CD4-positive, alpha-beta T cell (primary cell): ENCODE measurements at regions of chr2 and their contacts with region 1.

Region 1: DNA sequence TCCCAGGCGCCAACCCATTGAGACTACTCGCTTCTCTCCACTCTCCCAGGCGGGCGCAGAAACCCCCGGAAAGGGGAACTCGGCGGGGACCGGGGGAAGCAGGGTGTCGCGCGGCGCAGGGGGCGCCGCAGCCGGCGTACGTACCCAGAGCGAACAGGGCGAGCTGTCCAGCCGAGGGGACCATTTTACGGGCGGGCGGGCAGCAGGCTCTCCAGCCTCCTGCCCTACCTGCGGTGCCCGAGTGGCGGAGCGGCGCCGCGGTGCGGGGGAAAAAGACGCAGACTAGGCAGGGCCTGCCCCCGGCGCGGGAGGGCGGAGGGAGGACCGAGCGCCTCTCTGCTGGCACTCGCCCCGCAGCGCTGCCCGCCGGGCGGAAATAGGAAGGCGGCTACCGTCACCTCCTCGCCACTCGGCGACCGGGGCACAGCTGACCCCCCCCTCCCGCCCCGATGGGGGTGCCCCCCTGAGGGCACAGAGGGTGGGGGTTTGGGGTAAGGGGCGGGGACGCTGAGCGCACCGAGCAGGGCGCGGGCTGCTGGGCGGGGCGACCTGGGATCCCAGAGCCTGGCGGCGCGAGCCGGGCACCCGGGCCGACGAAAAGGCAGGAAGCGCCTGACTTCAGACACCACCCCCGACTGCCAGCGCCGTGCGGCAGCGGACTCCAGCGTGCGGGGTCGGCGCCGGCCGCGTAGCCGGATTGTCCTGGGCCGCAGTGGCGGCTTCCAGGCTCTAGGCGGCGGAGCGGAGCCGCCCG is at the start of gene TGFA:
- DNase-seq: peak; percentile 42 to 89 (median 62)
- ATAC-seq: peak; percentile 78
- H3K4me3 ChIP-seq: peak within 1 kb of the TSS; percentile 65
- H3K4me3 Mint-ChIP-seq: peak within 1 kb of the TSS; percentile 93
- H3K27ac ChIP-seq: peak within 1 kb of the TSS in 1 of 2 donors; percentile 17
- H3K27ac Mint-ChIP-seq: peak within 1 kb of the TSS; percentile 73
- H3K4me1 ChIP-seq: peaks cover 24% of the 10 kb centered on the region
- H3K4me1 Mint-ChIP-seq: peaks cover 34% of the 10 kb centered on the region
- H3K27me3 ChIP-seq: no peaks in the 10 kb centered on the region
- H3K27me3 Mint-ChIP-seq: peaks cover 15% of the 10 kb centered on the region
- CTCF ChIP-seq: peak; percentile 79
- total RNA-seq, gene TGFA: 0.47 to 0.88 TPM

Region 2: GRCh38 chr2:70340921-70341765 is 212.6 kb before region 1 on chr2:
- CTCF ChIA-PET with region 1: no interaction called
- POLR2A ChIA-PET with region 1: no interaction called
- intact Hi-C with region 1: loop called in 1 of 2 experiments (anchors 5 kb)
- DNase-seq: peak; percentile 2 to 71 (median 16)
- ATAC-seq: peak; percentile 57
- H3K4me3 ChIP-seq: no peak overlapping the region
- H3K4me3 Mint-ChIP-seq: no peak overlapping the region
- H3K27ac ChIP-seq: no peak overlapping the region
- H3K27ac Mint-ChIP-seq: no peak overlapping the region
- H3K4me1 ChIP-seq: peaks cover 7% of the 10 kb centered on the region
- H3K4me1 Mint-ChIP-seq: peaks cover 9% of the 10 kb centered on the region
- H3K27me3 ChIP-seq: no peaks in the 10 kb centered on the region
- H3K27me3 Mint-ChIP-seq: no peaks in the 10 kb centered on the region
- CTCF ChIP-seq: peak; percentile 93

Region 3: GRCh38 chr2:70616168-70616694 is 62.5 kb after region 1 on chr2:
- CTCF ChIA-PET with region 1: interaction called, 3 read pairs
- POLR2A ChIA-PET with region 1: interaction called, 3 read pairs
- intact Hi-C with region 1: loop called in 1 of 2 experiments (anchors 5 kb)
- DNase-seq: no peak
- ATAC-seq: no peak
- H3K4me3 ChIP-seq: no peak overlapping the region
- H3K4me3 Mint-ChIP-seq: no peak overlapping the region
- H3K27ac ChIP-seq: no peak overlapping the region
- H3K27ac Mint-ChIP-seq: no peak overlapping the region
- H3K4me1 ChIP-seq: no peaks in the 10 kb centered on the region
- H3K4me1 Mint-ChIP-seq: no peaks in the 10 kb centered on the region
- H3K27me3 ChIP-seq: peaks cover 0 to under 1% of the 10 kb centered on the region in 2 experiments
- H3K27me3 Mint-ChIP-seq: no peaks in the 10 kb centered on the region
- CTCF ChIP-seq: no peak

Region 4: DNA sequence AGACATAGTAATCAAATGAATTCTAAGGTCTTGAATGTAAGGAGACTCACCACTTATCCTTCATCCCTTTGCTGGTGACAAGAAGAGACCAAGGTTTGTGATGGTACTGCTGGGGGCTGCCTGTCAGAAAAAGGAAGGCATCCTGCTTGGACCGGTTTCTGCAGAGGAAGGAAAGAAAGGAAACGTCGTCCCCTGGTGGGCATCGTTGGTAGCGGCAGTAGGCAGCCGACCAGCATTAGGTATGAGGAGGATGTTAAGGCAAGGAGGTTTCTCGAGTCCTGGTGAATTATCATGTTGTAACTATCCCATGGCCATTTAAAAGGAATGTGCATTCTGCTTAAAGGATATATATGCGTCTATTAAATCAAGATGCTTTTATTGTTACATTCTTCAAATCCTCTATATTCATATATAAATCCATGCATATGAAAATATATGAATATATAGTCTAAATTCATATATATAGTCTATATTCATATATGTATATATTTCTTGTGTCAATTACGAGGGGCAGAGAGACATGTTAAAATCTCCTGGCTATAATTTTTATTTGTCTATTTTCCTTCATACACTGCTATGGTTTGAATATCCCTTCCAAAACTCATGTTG is 94.2 kb after region 1 on chr2:
- CTCF ChIA-PET with region 1: no interaction called
- POLR2A ChIA-PET with region 1: no interaction called
- intact Hi-C with region 1: loop called (anchors 5 kb)
- DNase-seq: peak; percentile 63 to 85 (median 72)
- ATAC-seq: peak; percentile 91
- H3K4me3 ChIP-seq: no peak overlapping the region
- H3K4me3 Mint-ChIP-seq: no peak overlapping the region
- H3K27ac ChIP-seq: no peak overlapping the region
- H3K27ac Mint-ChIP-seq: no peak overlapping the region
- H3K4me1 ChIP-seq: no peaks in the 10 kb centered on the region
- H3K4me1 Mint-ChIP-seq: peaks cover 5% of the 10 kb centered on the region
- H3K27me3 ChIP-seq: peaks cover 0 to 2% of the 10 kb centered on the region in 2 experiments
- H3K27me3 Mint-ChIP-seq: peaks cover 4% of the 10 kb centered on the region
- CTCF ChIP-seq: peak; percentile 96